Heart left ventricle (tissue), 16 donors: ENCODE measurements at regions of chr11 and their contacts with region 1.

Region 1: GRCh38 chr11:44893846-44894617 is 56.7 kb downstream of the TP53I11 start:
- DNase-seq: peak; percentile 69 to 84 (median 83)
- ATAC-seq: peak; percentile 84 to 92 (median 88)
- H3K4me3 ChIP-seq: no peak overlapping the region
- H3K27ac ChIP-seq: peak overlapping the region in 8 of 12 donors; percentile 18 to 78 (median 57)
- H3K4me1 ChIP-seq: peaks cover 0 to 39% (median 20%) of the 10 kb centered on the region in 12 donors
- H3K27me3 ChIP-seq: no peaks in the 10 kb centered on the region
- CTCF ChIP-seq: peak; percentile 80 to 95 (median 88)
- POLR2A ChIP-seq: no peak

Region 2: DNA sequence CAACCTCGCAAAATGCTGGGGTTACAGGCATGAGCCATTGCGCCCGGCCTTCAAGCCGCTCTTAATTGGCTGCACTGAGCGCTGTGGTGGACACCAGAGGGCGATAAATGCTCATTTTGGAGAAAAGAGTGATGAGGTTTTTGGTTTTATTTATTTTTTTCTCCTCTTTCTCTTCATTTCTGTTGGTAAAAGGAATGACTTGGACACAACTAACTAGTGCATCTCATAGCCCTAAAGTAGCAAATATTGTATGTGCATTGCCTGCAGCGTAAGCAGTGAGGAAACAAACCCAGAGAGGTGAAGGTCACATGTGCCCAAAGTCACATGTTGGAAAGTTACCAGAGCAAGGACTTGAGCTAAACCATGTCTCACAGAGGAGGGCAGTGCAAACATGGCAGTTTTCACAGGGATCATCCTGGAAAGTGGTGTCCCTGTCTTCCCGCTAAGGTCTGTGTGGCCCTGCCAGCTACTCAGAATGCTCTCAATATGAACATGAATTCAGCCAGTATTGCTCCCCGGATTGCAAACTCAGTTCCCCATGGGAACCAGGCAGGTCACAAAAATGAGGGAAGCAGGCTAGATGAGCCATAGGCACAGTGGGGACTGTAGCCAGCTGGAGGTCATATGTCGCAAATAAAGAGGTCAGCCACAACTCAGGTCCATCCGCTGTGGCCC is 337.2 kb before region 1 on chr11:
- intact Hi-C with region 1: loop called in 1 of 10 experiments (anchors 5 kb)
- DNase-seq: peak in 4 of 5 donors; percentile 57 to 81 (median 66)
- ATAC-seq: peak; percentile 65 to 85 (median 78)
- H3K4me3 ChIP-seq: no peak overlapping the region
- H3K27ac ChIP-seq: peak overlapping the region in 1 of 12 donors; percentile 13
- H3K4me1 ChIP-seq: peaks cover 0 to 28% (median 5%) of the 10 kb centered on the region in 12 donors
- H3K27me3 ChIP-seq: no peaks in the 10 kb centered on the region
- CTCF ChIP-seq: peak; percentile 72 to 95 (median 82)
- POLR2A ChIP-seq: no peak

Region 3: GRCh38 chr11:44627911-44628729 is 265.9 kb before region 1 on chr11:
- intact Hi-C with region 1: loop called in 6 of 10 experiments (anchors 2 to 5 kb)
- DNase-seq: peak; percentile 84 to 90 (median 85)
- ATAC-seq: peak; percentile 76 to 87 (median 84)
- H3K4me3 ChIP-seq: no peak overlapping the region
- H3K27ac ChIP-seq: peak overlapping the region; percentile 42 to 87 (median 76)
- H3K4me1 ChIP-seq: peaks cover 7 to 64% (median 38%) of the 10 kb centered on the region in 12 donors
- H3K27me3 ChIP-seq: no peaks in the 10 kb centered on the region
- CTCF ChIP-seq: peak in 4 of 12 donors; percentile 9 to 19 (median 12)
- POLR2A ChIP-seq: no peak

Region 4: GRCh38 chr11:44785856-44786606 is 108.0 kb before region 1 on chr11:
- intact Hi-C with region 1: loop called in 2 of 10 experiments (anchors 5 to 10 kb)
- DNase-seq: no peak
- ATAC-seq: peak in 3 of 4 donors; percentile 26 to 42 (median 33)
- H3K4me3 ChIP-seq: no peak overlapping the region
- H3K27ac ChIP-seq: peak overlapping the region in 3 of 12 donors; percentile 15 to 17 (median 17)
- H3K4me1 ChIP-seq: peaks cover 7 to 76% (median 39%) of the 10 kb centered on the region in 12 donors
- H3K27me3 ChIP-seq: no peaks in the 10 kb centered on the region
- CTCF ChIP-seq: peak in 3 of 12 donors; percentile 12 to 32 (median 20)
- POLR2A ChIP-seq: no peak

Region 5: GRCh38 chr11:44868455-44869421 is 25.3 kb before region 1 on chr11:
- intact Hi-C with region 1: loop called in 1 of 10 experiments (anchors 2 kb)
- DNase-seq: no peak
- ATAC-seq: peak; percentile 10 to 53 (median 41)
- H3K4me3 ChIP-seq: no peak overlapping the region
- H3K27ac ChIP-seq: peak overlapping the region in 2 of 12 donors; percentile 23 to 64
- H3K4me1 ChIP-seq: peaks cover 0 to 34% (median 6%) of the 10 kb centered on the region in 12 donors
- H3K27me3 ChIP-seq: no peaks in the 10 kb centered on the region
- CTCF ChIP-seq: no peak
- POLR2A ChIP-seq: no peak